ENCODE measurements at regions of chr19 and their contacts with region 1.

Region 1: GRCh38 chr19:5339950-5340636 is 519 bp downstream of the PTPRS start:
- DNase-seq: peak; percentile 49
- H3K4me3 ChIP-seq: peak overlapping the region; percentile 83
- H3K27ac ChIP-seq: peak overlapping the region; percentile 85
- H3K4me1 ChIP-seq: peaks cover 11% of the 10 kb centered on the region
- H3K27me3 ChIP-seq: no peaks in the 10 kb centered on the region
- CTCF ChIP-seq: peak; percentile 23; the same call in 1 of the 2 replicates

Region 2: DNA sequence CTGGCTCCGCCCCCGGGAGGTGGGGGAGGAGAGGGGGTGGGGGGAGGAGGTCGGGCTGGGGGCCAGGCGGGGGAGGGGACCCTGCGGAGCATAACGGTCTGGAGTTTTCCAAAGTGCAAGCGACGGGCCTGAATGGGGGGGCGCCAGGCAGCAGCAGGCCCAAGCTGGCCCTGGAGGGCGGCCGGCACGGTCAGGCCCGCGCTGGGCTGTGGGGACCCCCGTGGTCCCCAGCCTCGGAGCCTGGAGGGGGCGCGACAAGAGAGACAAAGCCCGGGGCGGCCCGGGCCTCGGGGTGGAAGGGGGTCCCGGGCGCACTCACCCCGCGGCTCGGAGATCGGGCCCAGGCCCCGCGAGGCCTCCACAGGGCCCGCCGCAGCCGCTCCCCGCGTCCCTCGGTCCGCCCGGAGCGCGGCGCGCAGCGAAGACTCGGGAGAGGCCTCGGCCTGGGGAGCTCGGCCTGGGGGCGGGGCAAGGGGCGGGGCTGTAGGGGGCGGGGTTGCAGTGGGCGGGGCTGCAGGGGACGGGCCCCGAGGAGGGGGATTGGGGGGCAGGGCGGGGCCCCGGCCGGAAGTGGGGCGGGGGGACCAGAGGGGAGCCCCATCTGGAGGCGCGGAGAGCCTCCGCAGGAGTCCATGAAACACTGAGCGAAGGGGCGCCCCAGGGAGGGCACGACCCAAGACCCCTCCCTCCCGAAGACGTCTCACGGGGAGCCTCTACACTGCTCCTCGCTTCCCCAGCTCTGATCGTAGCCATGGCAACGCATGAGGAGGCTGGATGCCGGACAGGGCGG is 47.1 kb before region 1 on chr19:
- CTCF ChIA-PET with region 1: no interaction called
- POLR2A ChIA-PET with region 1: no interaction called
- intact Hi-C with region 1: loop called (anchors 1 kb)
- DNase-seq: peak; percentile 86
- H3K4me3 ChIP-seq: peak overlapping the region; percentile 69
- H3K27ac ChIP-seq: peak overlapping the region; percentile 93
- H3K4me1 ChIP-seq: peaks cover 9% of the 10 kb centered on the region
- H3K27me3 ChIP-seq: no peaks in the 10 kb centered on the region
- CTCF ChIP-seq: no peak

Measured in A673 (cell line).